GM12878 (cell line): ENCODE measurements at regions of chr7 and their contacts with region 1.

Region 1: GRCh38 chr7:97272237-97272975 is 154.9 kb downstream of the SDHAF3 start:
- DNase-seq: peak; percentile 9
- ATAC-seq: peak; percentile 94
- H3K4me3 ChIP-seq: no peak overlapping the region
- H3K27ac ChIP-seq: no peak overlapping the region
- H3K4me1 ChIP-seq: peaks cover 6% of the 10 kb centered on the region
- H3K27me3 ChIP-seq: no peaks in the 10 kb centered on the region
- CTCF ChIP-seq: no peak
- EP300 ChIP-seq: 0 out of 4 replicates have a peak, but pooled peaks of 1 of the 2 experiments have one; percentile 0
- POLR2A ChIP-seq: no peak
- RAD21 ChIP-seq: no peak

Region 2: GRCh38 chr7:97075928-97076327 is 196.5 kb before region 1 on chr7:
- CTCF ChIA-PET with region 1: no interaction called
- POLR2A ChIA-PET with region 1: no interaction called
- RAD21 ChIA-PET with region 1: no interaction called
- SMC1A ChIA-PET with region 1: no interaction called
- in situ Hi-C with region 1: no loop called
- intact Hi-C with region 1: no loop called
- DNase-seq: no peak
- ATAC-seq: no peak
- H3K4me3 ChIP-seq: no peak overlapping the region
- H3K27ac ChIP-seq: no peak overlapping the region
- H3K4me1 ChIP-seq: no peaks in the 10 kb centered on the region
- H3K27me3 ChIP-seq: no peaks in the 10 kb centered on the region
- CTCF ChIP-seq: no peak
- EP300 ChIP-seq: no peak
- POLR2A ChIP-seq: no peak
- RAD21 ChIP-seq: no peak

Region 3: GRCh38 chr7:97285348-97285747 is 12.9 kb after region 1 on chr7:
- CTCF ChIA-PET with region 1: interaction called, 3 read pairs
- POLR2A ChIA-PET with region 1: no interaction called
- RAD21 ChIA-PET with region 1: no interaction called
- SMC1A ChIA-PET with region 1: interaction called, 13 read pairs
- in situ Hi-C with region 1: no loop called
- intact Hi-C with region 1: no loop called
- DNase-seq: no peak
- ATAC-seq: no peak
- H3K4me3 ChIP-seq: no peak overlapping the region
- H3K27ac ChIP-seq: no peak overlapping the region
- H3K4me1 ChIP-seq: no peaks in the 10 kb centered on the region
- H3K27me3 ChIP-seq: no peaks in the 10 kb centered on the region
- CTCF ChIP-seq: no peak
- EP300 ChIP-seq: no peak
- POLR2A ChIP-seq: no peak
- RAD21 ChIP-seq: no peak

Region 4: DNA sequence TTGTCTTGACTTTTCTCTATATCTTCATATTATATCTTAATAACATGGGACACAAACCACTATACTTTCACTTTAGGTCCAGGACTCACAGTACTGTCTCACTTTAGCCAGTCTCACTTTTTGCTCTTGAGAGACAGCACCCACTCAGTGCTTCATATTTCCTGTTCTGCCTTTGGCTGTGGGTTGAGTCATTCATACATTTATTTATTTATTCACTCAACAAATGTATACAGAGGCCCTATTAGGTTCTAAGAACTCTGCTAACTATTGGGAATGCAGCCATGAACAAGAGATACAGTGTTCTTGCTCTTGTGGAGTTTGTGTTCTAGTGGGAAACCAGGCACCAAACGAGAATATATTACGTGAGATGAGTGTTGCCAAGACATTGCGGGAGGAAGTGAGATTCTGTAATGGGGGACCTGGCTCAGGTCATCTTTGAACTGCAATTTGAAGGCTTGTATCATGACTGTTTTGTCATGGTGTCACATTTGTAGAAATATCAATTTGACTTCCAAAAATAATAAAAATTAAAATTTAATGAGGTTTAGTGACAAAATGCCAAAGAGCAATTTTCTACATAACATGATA is 35.2 kb after region 1 on chr7:
- CTCF ChIA-PET with region 1: interaction called, 3 read pairs
- POLR2A ChIA-PET with region 1: no interaction called
- RAD21 ChIA-PET with region 1: no interaction called
- SMC1A ChIA-PET with region 1: interaction called, 3 read pairs
- in situ Hi-C with region 1: no loop called
- intact Hi-C with region 1: loop called (anchors 5 kb)
- DNase-seq: no peak
- ATAC-seq: peak; percentile 80
- H3K4me3 ChIP-seq: no peak overlapping the region
- H3K27ac ChIP-seq: no peak overlapping the region
- H3K4me1 ChIP-seq: no peaks in the 10 kb centered on the region
- H3K27me3 ChIP-seq: no peaks in the 10 kb centered on the region
- CTCF ChIP-seq: no peak
- EP300 ChIP-seq: no peak
- POLR2A ChIP-seq: no peak
- RAD21 ChIP-seq: no peak

Region 5: DNA sequence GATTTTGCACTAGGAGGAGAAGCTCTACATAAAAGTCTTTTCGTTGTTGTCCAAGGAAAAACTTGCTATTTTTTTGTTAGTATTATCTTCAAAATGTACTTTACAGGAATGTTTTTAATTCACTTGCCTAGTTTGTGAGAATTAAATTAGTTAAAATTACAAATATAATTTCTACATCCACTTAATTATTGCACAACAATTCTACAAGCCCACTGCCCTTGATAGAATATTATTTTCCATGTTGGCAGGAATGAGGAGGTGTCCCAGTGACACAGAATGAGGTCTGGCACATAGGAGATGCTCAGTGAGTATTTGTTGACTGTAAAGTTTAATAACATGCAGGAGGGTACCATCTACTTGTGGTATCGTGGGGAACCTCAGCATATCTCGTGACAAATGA is 100.5 kb after region 1 on chr7:
- CTCF ChIA-PET with region 1: no interaction called
- POLR2A ChIA-PET with region 1: no interaction called
- RAD21 ChIA-PET with region 1: no interaction called
- SMC1A ChIA-PET with region 1: no interaction called
- in situ Hi-C with region 1: no loop called
- intact Hi-C with region 1: no loop called
- DNase-seq: no peak
- ATAC-seq: no peak
- H3K4me3 ChIP-seq: no peak overlapping the region
- H3K27ac ChIP-seq: no peak overlapping the region
- H3K4me1 ChIP-seq: no peaks in the 10 kb centered on the region
- H3K27me3 ChIP-seq: no peaks in the 10 kb centered on the region
- CTCF ChIP-seq: no peak
- EP300 ChIP-seq: no peak
- POLR2A ChIP-seq: no peak
- RAD21 ChIP-seq: no peak

Region 6: DNA sequence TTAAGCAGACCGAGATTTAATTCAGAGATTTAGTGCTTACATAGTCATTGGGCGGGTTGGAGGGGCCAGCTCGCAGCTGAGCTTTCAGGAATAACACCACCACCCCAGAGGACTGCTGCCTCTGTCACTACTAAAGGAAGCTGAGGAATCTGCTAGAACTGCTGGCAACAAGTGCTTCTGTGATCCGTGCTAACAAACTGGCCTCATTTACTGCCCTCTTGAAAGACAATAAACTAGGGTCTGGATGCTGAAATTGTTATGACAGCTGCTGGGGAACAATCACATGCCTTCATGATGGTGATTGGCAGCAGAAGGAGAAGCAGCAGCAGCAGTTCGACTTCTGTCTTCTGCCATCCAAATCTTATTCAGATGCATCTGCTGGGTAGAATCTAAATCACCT is 174.0 kb after region 1 on chr7:
- CTCF ChIA-PET with region 1: no interaction called
- POLR2A ChIA-PET with region 1: no interaction called
- RAD21 ChIA-PET with region 1: no interaction called
- SMC1A ChIA-PET with region 1: no interaction called
- in situ Hi-C with region 1: no loop called
- intact Hi-C with region 1: no loop called
- DNase-seq: no peak
- ATAC-seq: no peak
- H3K4me3 ChIP-seq: no peak overlapping the region
- H3K27ac ChIP-seq: no peak overlapping the region
- H3K4me1 ChIP-seq: no peaks in the 10 kb centered on the region
- H3K27me3 ChIP-seq: no peaks in the 10 kb centered on the region
- CTCF ChIP-seq: no peak
- EP300 ChIP-seq: no peak
- POLR2A ChIP-seq: no peak
- RAD21 ChIP-seq: no peak